ENCODE measurements at regions of chr7 and their contacts with region 1.

Region 1: DNA sequence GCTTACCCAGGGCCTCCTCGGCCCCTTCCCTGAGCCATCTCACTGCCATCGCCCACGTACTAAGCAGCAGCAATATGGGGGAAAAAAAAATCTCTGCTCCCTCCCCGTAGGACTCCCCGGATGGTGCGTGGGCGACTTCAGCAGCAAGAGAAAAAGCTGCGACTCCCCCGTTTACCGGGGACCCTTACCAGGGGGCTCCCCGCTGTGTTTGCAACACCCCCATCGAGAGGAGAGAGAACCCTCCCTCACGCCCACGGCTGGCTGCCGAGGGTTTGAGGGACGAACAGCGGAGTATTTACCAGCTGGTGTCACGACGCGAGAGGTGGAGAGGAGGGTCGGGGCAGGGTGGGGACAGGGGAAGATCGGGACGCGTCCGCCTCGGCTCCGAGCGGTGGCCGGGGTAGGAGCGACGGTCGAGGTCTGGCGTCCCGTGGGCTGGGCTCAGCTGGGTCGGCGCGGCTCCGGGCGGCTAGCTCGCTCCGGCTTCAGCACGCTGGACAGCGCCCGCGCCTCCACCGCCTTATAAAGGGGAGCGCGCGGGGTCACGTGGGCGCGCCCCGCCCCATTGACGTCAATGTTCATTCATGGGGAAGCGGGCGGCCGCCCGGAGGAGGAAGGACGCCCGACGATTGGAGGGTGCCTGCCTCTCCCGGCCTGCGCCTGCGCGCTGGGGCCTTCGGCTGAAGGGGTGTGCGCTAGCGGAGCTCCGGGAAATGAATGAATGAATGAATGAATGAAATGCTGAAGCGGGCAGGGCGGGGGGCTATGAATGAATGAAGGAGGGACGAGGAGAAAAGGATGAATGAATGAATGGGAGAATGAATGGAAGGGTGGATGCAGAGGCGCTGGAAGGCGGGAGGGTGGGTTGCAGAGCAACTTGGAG is at the start of gene VGF:
- DNase-seq: peak; percentile 92 to 96
- ATAC-seq: peak; percentile 81 to 95 (median 86)
- H3K4me3 ChIP-seq: no peak within 1 kb of the TSS
- H3K4me3 Mint-ChIP-seq: peak within 1 kb of the TSS; percentile 85
- H3K27ac ChIP-seq: no peak within 1 kb of the TSS
- H3K27ac Mint-ChIP-seq: peak within 1 kb of the TSS; percentile 57 to 79
- H3K4me1 ChIP-seq: peaks cover 44% of the 10 kb centered on the region
- H3K4me1 Mint-ChIP-seq: peaks cover 21 to 46% of the 10 kb centered on the region in 2 donors
- H3K27me3 ChIP-seq: peaks cover 59% of the 10 kb centered on the region
- H3K27me3 Mint-ChIP-seq: peaks cover 46% of the 10 kb centered on the region in 2 donors
- CTCF ChIP-seq: no peak
- total RNA-seq, gene VGF: not detected

Region 2: GRCh38 chr7:101035941-101036340 is 129.4 kb before region 1 on chr7:
- intact Hi-C with region 1: no loop called
- DNase-seq: no peak
- ATAC-seq: no peak
- H3K4me3 ChIP-seq: no peak overlapping the region
- H3K4me3 Mint-ChIP-seq: no peak overlapping the region
- H3K27ac ChIP-seq: no peak overlapping the region
- H3K27ac Mint-ChIP-seq: no peak overlapping the region
- H3K4me1 ChIP-seq: no peaks in the 10 kb centered on the region
- H3K4me1 Mint-ChIP-seq: no peaks in the 10 kb centered on the region
- H3K27me3 ChIP-seq: no peaks in the 10 kb centered on the region
- H3K27me3 Mint-ChIP-seq: peaks cover 3 to 4% of the 10 kb centered on the region in 2 donors
- CTCF ChIP-seq: no peak

Region 3: DNA sequence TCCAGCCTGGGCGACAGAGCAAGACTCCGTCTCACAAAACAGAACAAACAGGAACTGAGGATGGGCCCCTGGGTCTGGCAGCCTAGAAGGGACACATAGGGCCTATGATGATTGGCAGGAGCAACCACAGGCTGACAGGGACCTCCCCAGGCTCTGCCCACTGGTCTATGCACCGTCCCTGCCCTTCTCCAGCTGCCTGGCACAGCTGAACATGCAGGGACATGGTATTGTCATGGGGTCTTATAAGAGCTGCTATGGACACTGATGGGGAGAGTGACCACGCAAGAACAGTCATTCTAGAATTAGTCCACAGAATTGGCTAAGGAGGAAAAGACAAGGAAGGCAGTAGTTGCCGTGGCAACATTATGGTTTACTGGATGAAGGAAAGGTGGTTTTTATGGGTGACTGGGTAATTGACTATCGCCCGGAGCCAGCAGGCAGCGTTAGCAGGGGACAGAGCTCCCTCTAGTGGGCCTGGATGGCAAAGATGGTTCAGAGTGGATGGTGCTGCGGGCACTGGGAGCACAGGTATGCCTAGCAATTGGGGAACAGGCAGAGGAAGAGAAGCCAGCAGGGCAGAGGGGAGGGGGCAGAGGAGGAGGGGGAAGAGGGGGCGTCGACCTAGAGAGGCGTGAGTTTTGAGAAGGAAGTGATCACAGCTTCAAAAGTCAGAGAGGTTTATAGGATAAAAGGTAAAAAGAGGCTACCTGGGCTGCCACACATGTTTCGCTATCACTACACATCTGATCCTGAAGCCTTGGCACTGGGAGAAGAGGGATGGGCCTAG is 87.8 kb before region 1 on chr7:
- intact Hi-C with region 1: loop called (anchors 2 kb)
- DNase-seq: peak; percentile 69 to 90
- ATAC-seq: peak; percentile 92 to 100 (median 99)
- H3K4me3 ChIP-seq: no peak overlapping the region
- H3K4me3 Mint-ChIP-seq: no peak overlapping the region
- H3K27ac ChIP-seq: no peak overlapping the region
- H3K27ac Mint-ChIP-seq: no peak overlapping the region
- H3K4me1 ChIP-seq: peaks cover 7% of the 10 kb centered on the region
- H3K4me1 Mint-ChIP-seq: peaks cover 6 to 8% of the 10 kb centered on the region in 2 donors
- H3K27me3 ChIP-seq: no peaks in the 10 kb centered on the region
- H3K27me3 Mint-ChIP-seq: peaks cover 0 to 13% of the 10 kb centered on the region in 2 donors
- CTCF ChIP-seq: peak; percentile 87

Region 4: GRCh38 chr7:101138213-101138870 is 27.0 kb before region 1 on chr7:
- intact Hi-C with region 1: loop called (anchors 1 kb)
- DNase-seq: peak; percentile 85 to 87
- ATAC-seq: peak; percentile 85 to 99 (median 97)
- H3K4me3 ChIP-seq: no peak overlapping the region
- H3K4me3 Mint-ChIP-seq: peak overlapping the region; percentile 67
- H3K27ac ChIP-seq: peak overlapping the region; percentile 68
- H3K27ac Mint-ChIP-seq: peak overlapping the region; percentile 88 to 98
- H3K4me1 ChIP-seq: peaks cover 22% of the 10 kb centered on the region
- H3K4me1 Mint-ChIP-seq: peaks cover 21 to 33% of the 10 kb centered on the region in 2 donors
- H3K27me3 ChIP-seq: no peaks in the 10 kb centered on the region
- H3K27me3 Mint-ChIP-seq: peaks cover 0 to 3% of the 10 kb centered on the region in 2 donors
- CTCF ChIP-seq: peak; percentile 92